ENCODE measurements at regions of chr9 and their contacts with region 1.

Region 1: DNA sequence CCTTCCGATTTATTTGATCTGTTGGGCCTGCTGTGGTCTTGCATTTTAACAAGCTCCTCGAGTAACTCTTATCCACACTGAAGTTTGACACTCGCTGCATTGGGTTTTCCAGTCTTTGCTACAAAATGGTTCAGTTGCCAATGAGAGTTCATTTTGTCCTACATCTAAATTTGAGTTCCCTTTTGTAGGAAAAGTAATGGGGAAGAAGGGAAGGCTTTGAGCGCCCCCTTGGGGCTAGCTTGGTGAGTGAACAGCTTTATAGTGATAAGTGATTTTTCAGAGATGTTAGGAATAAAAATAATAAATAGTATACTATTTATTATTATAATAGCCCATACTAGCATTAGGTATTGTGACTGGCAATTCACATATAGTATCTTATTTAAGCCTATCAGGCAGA is 89.9 kb upstream of the GNAQ start:
- DNase-seq: peak in 7 of 9 donors; percentile 24 to 55 (median 37)
- ATAC-seq: peak; percentile 44
- H3K4me3 ChIP-seq: no peak overlapping the region
- H3K4me3 Mint-ChIP-seq: no peak overlapping the region
- H3K27ac ChIP-seq: no peak overlapping the region
- H3K27ac Mint-ChIP-seq: peak overlapping the region in 3 of 9 donors; percentile 44 to 94 (median 59)
- H3K4me1 ChIP-seq: peaks cover 17 to 32% of the 10 kb centered on the region in 2 donors
- H3K4me1 Mint-ChIP-seq: peaks cover 27 to 55% (median 47%) of the 10 kb centered on the region in 7 donors
- H3K27me3 ChIP-seq: no peaks in the 10 kb centered on the region
- H3K27me3 Mint-ChIP-seq: peaks cover 0 to 15% (median 0%) of the 10 kb centered on the region in 5 donors

Region 2: DNA sequence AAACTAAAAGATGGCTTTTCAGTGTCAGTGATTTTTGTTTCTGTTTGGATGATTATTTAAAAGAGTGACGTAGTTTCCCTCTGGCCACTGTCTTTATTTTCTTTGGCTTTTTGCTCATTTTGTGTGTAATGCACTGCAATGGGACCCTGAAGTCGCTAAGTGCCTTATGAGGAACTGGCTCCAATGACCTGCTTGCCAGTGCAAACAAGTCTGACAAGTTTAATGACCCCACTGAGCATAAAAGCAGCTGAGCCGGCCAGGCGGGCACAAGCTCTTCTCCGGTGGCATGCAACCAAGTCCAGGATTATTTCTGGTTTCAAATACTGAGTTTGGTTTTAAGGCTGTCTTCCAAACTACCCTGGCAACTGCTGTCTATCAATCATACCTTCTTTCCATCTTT is 457.7 kb before region 1 on chr9:
- CTCF ChIA-PET with region 1: no interaction called
- POLR2A ChIA-PET with region 1: no interaction called
- intact Hi-C with region 1: loop called in 1 of 2 experiments (anchors 5 kb)
- DNase-seq: no peak
- ATAC-seq: no peak
- H3K4me3 ChIP-seq: no peak overlapping the region
- H3K4me3 Mint-ChIP-seq: no peak overlapping the region
- H3K27ac ChIP-seq: no peak overlapping the region
- H3K27ac Mint-ChIP-seq: no peak overlapping the region
- H3K4me1 ChIP-seq: no peaks in the 10 kb centered on the region
- H3K4me1 Mint-ChIP-seq: no peaks in the 10 kb centered on the region
- H3K27me3 ChIP-seq: no peaks in the 10 kb centered on the region
- H3K27me3 Mint-ChIP-seq: peaks cover 0 to 13% (median 0%) of the 10 kb centered on the region in 5 donors

Region 3: GRCh38 chr9:77841739-77842386 is 279.6 kb before region 1 on chr9:
- CTCF ChIA-PET with region 1: interaction called, 5 read pairs
- POLR2A ChIA-PET with region 1: no interaction called
- intact Hi-C with region 1: loop called (anchors 1 to 2 kb)
- DNase-seq: peak in 5 of 9 donors; percentile 4 to 39 (median 17)
- ATAC-seq: peak; percentile 24
- H3K4me3 ChIP-seq: no peak overlapping the region
- H3K4me3 Mint-ChIP-seq: no peak overlapping the region
- H3K27ac ChIP-seq: no peak overlapping the region
- H3K27ac Mint-ChIP-seq: peak overlapping the region in 3 of 9 donors; percentile 17 to 32 (median 19)
- H3K4me1 ChIP-seq: no peaks in the 10 kb centered on the region
- H3K4me1 Mint-ChIP-seq: peaks cover 7 to 25% (median 13%) of the 10 kb centered on the region in 7 donors
- H3K27me3 ChIP-seq: no peaks in the 10 kb centered on the region
- H3K27me3 Mint-ChIP-seq: no peaks in the 10 kb centered on the region

Region 4: GRCh38 chr9:78074385-78075291 is 46.9 kb before region 1 on chr9:
- CTCF ChIA-PET with region 1: interaction called, 6 read pairs
- POLR2A ChIA-PET with region 1: interaction called, 3 read pairs
- intact Hi-C with region 1: loop called (anchors 1 to 5 kb)
- DNase-seq: peak in 7 of 9 donors; percentile 10 to 54 (median 44)
- ATAC-seq: peak; percentile 67
- H3K4me3 ChIP-seq: peak overlapping the region; percentile 25
- H3K4me3 Mint-ChIP-seq: peak overlapping the region; percentile 64 to 84 (median 76)
- H3K27ac ChIP-seq: peak overlapping the region; percentile 57
- H3K27ac Mint-ChIP-seq: peak overlapping the region; percentile 60 to 94 (median 85)
- H3K4me1 ChIP-seq: peaks cover 19 to 24% of the 10 kb centered on the region in 2 donors
- H3K4me1 Mint-ChIP-seq: peaks cover 38 to 60% (median 58%) of the 10 kb centered on the region in 7 donors
- H3K27me3 ChIP-seq: no peaks in the 10 kb centered on the region
- H3K27me3 Mint-ChIP-seq: peaks cover 0 to 5% (median 0%) of the 10 kb centered on the region in 5 donors

Region 5: GRCh38 chr9:78783743-78784142 is 662.3 kb after region 1 on chr9:
- CTCF ChIA-PET with region 1: no interaction called
- POLR2A ChIA-PET with region 1: no interaction called
- intact Hi-C with region 1: no loop called
- DNase-seq: no peak
- ATAC-seq: no peak
- H3K4me3 ChIP-seq: no peak overlapping the region
- H3K4me3 Mint-ChIP-seq: no peak overlapping the region
- H3K27ac ChIP-seq: no peak overlapping the region
- H3K27ac Mint-ChIP-seq: no peak overlapping the region
- H3K4me1 ChIP-seq: no peaks in the 10 kb centered on the region
- H3K4me1 Mint-ChIP-seq: no peaks in the 10 kb centered on the region
- H3K27me3 ChIP-seq: no peaks in the 10 kb centered on the region
- H3K27me3 Mint-ChIP-seq: no peaks in the 10 kb centered on the region

Measured in naive thymus-derived CD4-positive, alpha-beta T cell (primary cell).